ENCODE measurements at regions of chr22 and their contacts with region 1.

Region 1: GRCh38 chr22:31901388-31902137 is 42.8 kb upstream of the YWHAH start:
- DNase-seq: no peak

Region 2: GRCh38 chr22:31768422-31769059 is 133.0 kb before region 1 on chr22:
- intact Hi-C with region 1: no loop called
- DNase-seq: no peak

Region 3: GRCh38 chr22:31920306-31920705 is 18.7 kb after region 1 on chr22:
- intact Hi-C with region 1: loop called in 1 of 2 experiments (anchors 1 kb)
- DNase-seq: no peak